ENCODE measurements at regions of chr19 and their contacts with region 1.

Region 1: DNA sequence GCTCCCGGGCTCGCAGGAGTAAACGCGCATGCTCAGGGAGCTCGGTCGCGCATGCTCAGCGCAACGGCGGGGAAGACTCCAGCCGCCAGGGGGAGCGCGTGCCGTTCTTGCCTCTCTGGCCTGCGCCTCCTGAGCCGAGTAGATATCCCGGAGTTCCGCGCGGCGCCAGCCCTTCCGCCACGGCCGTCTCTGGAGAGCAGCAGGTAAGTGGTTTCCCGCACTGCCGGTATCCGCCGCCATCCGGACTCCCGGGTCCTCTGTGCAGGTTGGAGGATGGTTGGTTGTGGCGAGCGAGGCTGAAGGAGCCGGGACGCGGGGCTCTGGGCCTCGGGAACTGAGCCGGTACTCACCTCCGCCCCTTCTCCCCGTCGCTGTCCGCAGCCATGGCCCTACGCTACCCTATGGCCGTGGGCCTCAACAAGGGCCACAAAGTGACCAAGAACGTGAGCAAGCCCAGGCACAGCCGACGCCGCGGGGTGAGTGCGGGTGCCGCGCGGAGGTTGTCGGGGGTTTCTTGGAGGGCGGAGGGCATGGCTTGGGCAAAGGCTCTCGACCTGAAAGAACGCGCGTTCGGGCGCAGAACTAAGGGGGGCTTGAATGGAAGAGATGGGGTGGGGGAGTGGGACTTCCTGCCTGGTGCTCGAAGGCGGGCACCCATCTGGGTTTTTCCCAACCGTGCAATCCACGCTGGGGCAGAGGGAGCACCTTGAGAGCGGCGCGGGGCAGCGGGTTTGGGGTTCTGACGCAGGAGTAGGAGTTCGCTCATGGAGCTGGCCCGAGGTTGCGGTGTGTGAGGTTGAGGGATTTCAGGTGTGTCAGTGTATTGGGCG is at the start of gene RPL36:
- DNase-seq: peak; percentile 99
- H3K4me3 Mint-ChIP-seq: peak within 1 kb of the TSS; percentile 96
- H3K27ac Mint-ChIP-seq: peak within 1 kb of the TSS; percentile 95
- H3K4me1 Mint-ChIP-seq: peaks cover 31% of the 10 kb centered on the region
- H3K27me3 Mint-ChIP-seq: no peaks in the 10 kb centered on the region
- total RNA-seq, gene RPL36: 1,487 to 1,524 TPM

Region 2: DNA sequence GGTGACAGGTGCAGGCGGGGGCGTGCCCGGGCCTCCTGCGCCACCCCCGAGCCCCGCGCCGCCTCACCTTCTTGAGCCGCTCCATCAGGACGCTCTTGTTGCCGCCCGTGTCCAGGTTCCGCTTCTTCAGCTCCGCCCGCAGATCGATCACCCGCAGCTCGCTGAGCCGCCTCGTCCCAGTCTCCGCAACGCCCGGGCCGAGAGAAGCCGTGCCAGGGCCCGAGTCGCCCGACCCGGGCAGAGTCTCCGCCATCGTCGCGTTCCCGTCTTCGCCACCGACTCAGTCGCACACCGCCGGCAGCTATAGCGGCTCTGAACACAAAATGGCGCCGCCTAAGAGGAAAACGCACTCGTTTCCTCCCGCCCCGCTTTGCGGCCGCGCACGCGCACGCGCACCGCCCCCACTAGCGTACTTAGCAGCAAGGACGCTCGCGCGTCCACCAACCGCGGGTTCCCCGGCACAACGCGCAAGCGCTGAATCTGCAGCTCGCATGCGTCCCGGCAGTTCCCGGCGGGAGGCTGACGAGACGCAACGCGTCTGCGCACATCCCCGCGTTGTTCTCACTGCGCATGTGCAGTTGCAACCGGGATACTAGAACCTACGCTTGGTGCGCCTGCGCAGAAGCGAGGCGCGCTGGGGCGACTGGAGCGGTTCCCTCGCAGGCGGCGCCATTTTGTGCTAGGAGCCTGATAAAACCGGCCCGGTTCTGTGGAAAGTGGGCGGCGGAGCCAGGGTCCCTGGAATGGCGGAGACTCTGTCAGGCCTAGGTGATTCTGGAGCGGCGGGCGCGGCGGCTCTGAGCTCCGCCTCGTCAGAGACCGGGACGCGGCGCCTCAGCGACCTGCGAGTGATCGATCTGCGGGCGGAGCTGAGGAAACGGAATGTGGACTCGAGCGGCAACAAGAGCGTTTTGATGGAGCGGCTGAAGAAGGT is 67.6 kb before region 1 on chr19 and contains the starts of genes SAFB and SAFB2:
- CTCF ChIA-PET with region 1: interaction called, 7 read pairs
- POLR2A ChIA-PET with region 1: interaction called, 24 read pairs
- intact Hi-C with region 1: no loop called
- DNase-seq: peak; percentile 100
- H3K4me3 Mint-ChIP-seq: peak within 1 kb of the TSS; percentile 100
- H3K27ac Mint-ChIP-seq: peak within 1 kb of the TSS; percentile 100
- H3K4me1 Mint-ChIP-seq: peaks cover 67% of the 10 kb centered on the region
- H3K27me3 Mint-ChIP-seq: peaks cover 3% of the 10 kb centered on the region
- total RNA-seq, gene SAFB: 103 to 113 TPM
- total RNA-seq, gene SAFB2: 63.5 to 76.4 TPM

Region 3: GRCh38 chr19:5711713-5712161 is 21.4 kb after region 1 on chr19:
- CTCF ChIA-PET with region 1: interaction called, 103 read pairs
- POLR2A ChIA-PET with region 1: interaction called, 70 read pairs
- intact Hi-C with region 1: no loop called
- DNase-seq: no peak
- H3K4me3 Mint-ChIP-seq: no peak overlapping the region
- H3K27ac Mint-ChIP-seq: no peak overlapping the region
- H3K4me1 Mint-ChIP-seq: peaks cover 6% of the 10 kb centered on the region
- H3K27me3 Mint-ChIP-seq: no peaks in the 10 kb centered on the region

Region 4: DNA sequence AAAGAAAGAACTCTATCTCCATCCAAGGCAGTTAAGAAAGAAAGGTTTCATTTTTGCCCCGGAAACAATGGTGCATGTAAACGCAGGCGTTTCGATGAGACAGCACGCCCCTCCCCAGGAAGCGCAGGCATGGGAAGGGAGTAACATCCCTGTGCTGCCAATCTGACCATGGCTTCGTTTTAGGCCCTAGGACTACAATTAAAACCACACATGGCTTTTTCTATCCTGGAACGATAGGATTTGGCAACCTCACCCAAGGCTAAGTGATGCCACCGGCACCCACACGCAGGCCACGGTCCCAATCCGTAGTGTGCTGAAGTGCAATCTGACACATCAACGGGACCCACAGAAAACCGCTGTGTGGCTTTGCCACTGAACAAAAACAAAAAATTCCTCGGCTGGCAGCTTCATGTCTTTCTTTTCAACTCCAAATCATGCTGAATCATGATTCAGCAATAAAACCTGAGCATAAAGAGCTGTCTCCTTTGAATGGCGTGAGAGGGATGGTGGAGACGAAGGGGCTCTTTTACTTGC is 263.4 kb after region 1 on chr19:
- CTCF ChIA-PET with region 1: interaction called, 4 read pairs
- POLR2A ChIA-PET with region 1: no interaction called
- intact Hi-C with region 1: loop called (anchors 10 kb)
- DNase-seq: peak; percentile 64
- H3K4me3 Mint-ChIP-seq: peak overlapping the region; percentile 64
- H3K27ac Mint-ChIP-seq: peak overlapping the region; percentile 95
- H3K4me1 Mint-ChIP-seq: peaks cover 91% of the 10 kb centered on the region
- H3K27me3 Mint-ChIP-seq: no peaks in the 10 kb centered on the region